ENCODE measurements at regions of chrX and their contacts with region 1.

Region 1: DNA sequence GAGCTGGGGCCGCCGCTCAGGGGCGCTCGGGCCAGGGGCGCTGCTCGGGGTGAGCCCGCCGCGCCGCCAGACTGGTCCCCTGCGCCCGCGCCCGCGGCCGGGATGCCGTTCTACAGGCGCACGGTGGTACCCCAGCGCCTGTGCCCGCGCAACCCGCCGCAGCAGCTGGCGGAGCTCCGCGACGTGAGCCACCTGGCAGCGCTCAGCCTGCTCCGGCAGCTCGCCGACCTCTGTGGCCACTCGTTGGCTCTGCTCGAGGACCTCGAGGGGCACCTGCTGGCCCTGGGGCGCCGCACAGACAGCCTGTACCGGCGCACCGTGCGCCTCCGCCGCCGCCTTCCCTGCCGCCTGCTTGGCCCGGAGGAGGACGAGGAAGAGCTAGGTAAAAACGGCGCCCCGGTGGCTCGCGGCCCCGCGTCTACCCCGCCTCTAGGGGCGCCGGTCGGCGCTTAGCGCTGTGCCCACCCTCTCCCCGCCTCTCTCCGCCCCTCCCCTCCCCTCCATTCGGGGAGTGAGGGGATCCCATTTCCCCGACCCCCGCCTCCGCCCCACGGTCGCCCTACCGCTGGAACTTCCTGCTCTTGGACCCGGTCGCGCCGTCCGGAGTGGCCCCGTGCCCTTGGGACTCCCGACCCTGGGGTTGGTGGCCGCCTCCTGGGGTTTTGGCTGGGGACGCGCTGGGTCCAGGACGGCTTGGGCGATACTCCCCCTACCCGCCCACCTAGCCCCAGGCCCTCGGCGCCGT is 513 bp downstream of the NHSL2 start:
- DNase-seq: peak in 1 of 2 experiments; percentile 73
- H3K4me3 ChIP-seq: peak overlapping the region; percentile 53 to 86 (median 72)
- H3K27ac ChIP-seq: peak overlapping the region; percentile 75; the same call in 1 of the 2 replicates
- H3K4me1 ChIP-seq: peaks cover 2 to 5% (median 4%) of the 10 kb centered on the region in 4 experiments; a peak in 4 of 7 replicates
- H3K27me3 ChIP-seq: no peaks in the 10 kb centered on the region
- CTCF ChIP-seq: peak; percentile 19 to 51 (median 50)
- EP300 ChIP-seq: no peak
- POLR2A ChIP-seq: peak in 1 of 2 experiments; percentile 51; a peak in 1 of 3 replicates
- RAD21 ChIP-seq: peak; percentile 11 to 16; a peak in 2 of 4 replicates

Region 2: GRCh38 chrX:71927040-71927439 is 15.9 kb after region 1 on chrX:
- CTCF ChIA-PET with region 1: no interaction called
- POLR2A ChIA-PET with region 1: no interaction called
- DNase-seq: no peak
- H3K4me3 ChIP-seq: no peak overlapping the region
- H3K27ac ChIP-seq: no peak overlapping the region
- H3K4me1 ChIP-seq: peaks cover 0 to 4% (median 1%) of the 10 kb centered on the region in 4 experiments; a peak in 3 of 7 replicates
- H3K27me3 ChIP-seq: no peaks in the 10 kb centered on the region
- CTCF ChIP-seq: no peak
- EP300 ChIP-seq: no peak
- POLR2A ChIP-seq: no peak
- RAD21 ChIP-seq: no peak

Region 3: GRCh38 chrX:71938371-71938770 is 27.2 kb after region 1 on chrX:
- CTCF ChIA-PET with region 1: interaction called, 12 read pairs
- POLR2A ChIA-PET with region 1: interaction called, 9 read pairs
- DNase-seq: no peak
- H3K4me3 ChIP-seq: no peak overlapping the region
- H3K27ac ChIP-seq: no peak overlapping the region
- H3K4me1 ChIP-seq: peaks cover 4 to 17% (median 10%) of the 10 kb centered on the region in 4 experiments; a peak in 5 of 7 replicates
- H3K27me3 ChIP-seq: no peaks in the 10 kb centered on the region
- CTCF ChIP-seq: no peak
- EP300 ChIP-seq: no peak
- POLR2A ChIP-seq: no peak
- RAD21 ChIP-seq: no peak

Region 4: GRCh38 chrX:71958281-71958675 is 47.1 kb after region 1 on chrX:
- CTCF ChIA-PET with region 1: interaction called, 19 read pairs
- POLR2A ChIA-PET with region 1: interaction called, 16 read pairs
- DNase-seq: no peak
- H3K4me3 ChIP-seq: peak overlapping the region in 3 of 4 experiments; percentile 50 to 56 (median 55); a peak in 6 of 8 replicates
- H3K27ac ChIP-seq: peak overlapping the region; percentile 96
- H3K4me1 ChIP-seq: peaks cover 10 to 24% (median 24%) of the 10 kb centered on the region in 4 experiments
- H3K27me3 ChIP-seq: no peaks in the 10 kb centered on the region
- CTCF ChIP-seq: no peak
- EP300 ChIP-seq: no peak
- POLR2A ChIP-seq: no peak; a peak in 1 of 3 replicates
- RAD21 ChIP-seq: no peak

Region 5: GRCh38 chrX:71998836-71999509 is 87.8 kb after region 1 on chrX:
- CTCF ChIA-PET with region 1: interaction called, 68 read pairs
- POLR2A ChIA-PET with region 1: interaction called, 18 read pairs
- DNase-seq: no peak
- H3K4me3 ChIP-seq: no peak overlapping the region
- H3K27ac ChIP-seq: no peak overlapping the region
- H3K4me1 ChIP-seq: peaks cover 5 to 17% (median 14%) of the 10 kb centered on the region in 4 experiments; a peak in 5 of 7 replicates
- H3K27me3 ChIP-seq: no peaks in the 10 kb centered on the region
- CTCF ChIP-seq: peak in 2 of 3 experiments; percentile 28 to 49; a peak in 2 of 4 replicates
- EP300 ChIP-seq: no peak
- POLR2A ChIP-seq: no peak
- RAD21 ChIP-seq: peak; percentile 26 to 43; a peak in 2 of 4 replicates

Region 6: GRCh38 chrX:72003811-72004750 is 92.9 kb after region 1 on chrX:
- CTCF ChIA-PET with region 1: interaction called, 68 read pairs
- POLR2A ChIA-PET with region 1: interaction called, 18 read pairs
- DNase-seq: peak; percentile 49 to 58
- H3K4me3 ChIP-seq: peak overlapping the region in 2 of 4 experiments; percentile 6 to 42; a peak in 1 of 8 replicates
- H3K27ac ChIP-seq: no peak overlapping the region
- H3K4me1 ChIP-seq: peaks cover 1 to 10% (median 7%) of the 10 kb centered on the region in 4 experiments; a peak in 4 of 7 replicates
- H3K27me3 ChIP-seq: no peaks in the 10 kb centered on the region
- CTCF ChIP-seq: peak; percentile 57 to 73 (median 66)
- EP300 ChIP-seq: peak in 1 of 2 experiments; percentile 9; a peak in 1 of 3 replicates
- POLR2A ChIP-seq: no peak
- RAD21 ChIP-seq: peak; percentile 80 to 88